HEK293 (cell line): ENCODE measurements at regions of chr4 and their contacts with region 1.

Region 1: DNA sequence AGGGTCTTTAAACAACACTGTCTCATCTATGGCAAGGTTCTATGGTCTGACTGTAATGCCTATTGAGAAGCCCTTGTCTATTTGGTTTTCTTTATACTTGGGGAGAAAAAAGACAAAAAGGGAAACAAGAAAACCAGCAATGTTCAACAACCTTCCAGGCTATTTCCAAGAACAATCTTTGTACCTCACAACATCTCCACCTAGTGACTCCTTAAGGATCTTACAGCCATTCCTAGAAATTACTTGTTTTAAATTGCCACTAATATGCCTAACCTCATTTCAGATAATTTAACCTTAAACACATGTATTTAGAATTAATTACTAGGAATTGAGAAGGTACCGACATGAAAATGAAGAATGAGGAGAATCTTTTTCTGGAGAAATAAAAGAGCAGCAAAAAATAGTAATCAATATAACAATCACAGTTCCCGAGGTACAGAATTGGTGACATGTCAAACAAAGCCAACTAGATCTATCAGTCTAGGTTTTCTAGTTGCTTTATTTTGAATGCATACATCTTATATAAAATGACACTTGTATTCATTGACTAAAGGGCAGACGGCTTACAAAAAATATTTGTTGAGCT is 1.6 kb upstream of the RBM46 start:
- H3K4me3 ChIP-seq: no peak overlapping the region
- H3K27ac ChIP-seq: no peak overlapping the region
- H3K4me1 ChIP-seq: no peaks in the 10 kb centered on the region
- CTCF ChIP-seq: no peak

Region 2: GRCh38 chr4:154642373-154643009 is 137.0 kb before region 1 on chr4:
- CTCF ChIA-PET with region 1: interaction called, 30 read pairs
- POLR2A ChIA-PET with region 1: no interaction called
- H3K4me3 ChIP-seq: no peak overlapping the region
- H3K27ac ChIP-seq: no peak overlapping the region
- H3K4me1 ChIP-seq: no peaks in the 10 kb centered on the region
- CTCF ChIP-seq: no peak